ENCODE measurements at regions of chr15 and their contacts with region 1.

Region 1: DNA sequence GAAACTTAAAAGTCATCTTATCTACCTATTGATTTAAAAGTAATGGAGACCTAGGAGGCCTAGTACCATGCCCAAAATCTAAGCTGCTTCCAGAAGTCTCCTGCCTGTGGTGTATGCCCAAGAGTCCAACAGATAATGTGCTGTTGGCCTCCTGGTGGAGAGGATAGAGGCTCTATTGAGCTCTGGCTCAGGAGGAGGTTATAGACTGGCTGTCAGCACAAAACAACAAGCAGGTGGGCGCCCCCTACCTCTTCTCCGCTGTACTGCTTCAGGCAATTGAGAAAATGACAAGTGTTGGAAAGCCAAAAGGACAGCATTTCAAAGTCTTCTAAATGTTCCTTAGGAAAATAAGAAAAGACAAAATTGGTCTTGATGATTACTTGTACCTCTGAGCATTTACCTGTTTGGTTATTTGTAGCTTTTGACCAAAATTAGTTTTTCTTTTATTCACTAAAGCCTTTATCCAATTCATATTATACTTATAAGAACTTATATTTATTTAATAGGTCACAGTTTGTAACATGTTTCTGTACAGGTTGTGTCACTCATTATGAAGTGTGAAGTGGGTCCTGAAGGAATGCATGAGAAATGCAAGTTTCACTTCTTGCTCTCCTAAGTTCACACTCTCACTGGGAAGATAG is 17.2 kb upstream of the GNB5 start:
- DNase-seq: peak; percentile 67
- ATAC-seq: peak; percentile 88
- H3K4me3 ChIP-seq: no peak overlapping the region
- H3K27ac ChIP-seq: no peak overlapping the region
- H3K4me1 ChIP-seq: no peaks in the 10 kb centered on the region
- H3K27me3 ChIP-seq: peaks cover 25% of the 10 kb centered on the region
- CTCF ChIP-seq: peak; percentile 84
- POLR2A ChIP-seq: no peak
- RAD21 ChIP-seq: peak; percentile 63

Region 2: DNA sequence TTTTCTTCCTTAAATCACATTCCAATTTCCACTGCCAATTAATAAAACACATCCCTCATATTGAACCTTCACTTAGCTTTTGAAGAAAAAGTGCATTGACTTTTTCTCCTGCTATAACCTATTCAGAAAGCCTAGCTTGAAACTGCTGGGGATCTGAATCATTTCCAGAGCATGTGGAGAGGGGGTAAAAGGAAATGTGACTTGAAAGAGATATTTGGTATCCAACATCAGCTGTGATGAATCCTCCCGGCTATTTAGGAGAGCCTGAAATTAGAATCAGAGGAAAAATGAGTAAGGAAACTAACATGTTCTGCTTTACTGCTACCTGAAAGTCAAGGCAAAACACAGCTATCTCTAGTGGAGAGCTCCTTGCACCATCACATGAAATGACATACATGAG is 14.6 kb before region 1 on chr15:
- CTCF ChIA-PET with region 1: interaction called, 19 read pairs
- POLR2A ChIA-PET with region 1: no interaction called
- dilution Hi-C with region 1: no loop called
- in situ Hi-C with region 1: no loop called
- intact Hi-C with region 1: no loop called
- DNase-seq: peak; percentile 23
- ATAC-seq: no peak
- H3K4me3 ChIP-seq: no peak overlapping the region
- H3K27ac ChIP-seq: no peak overlapping the region
- H3K4me1 ChIP-seq: peaks cover 3% of the 10 kb centered on the region; the same call in 1 of the 2 replicates
- H3K27me3 ChIP-seq: peaks cover 13% of the 10 kb centered on the region
- CTCF ChIP-seq: no peak
- POLR2A ChIP-seq: no peak
- RAD21 ChIP-seq: no peak